Body of pancreas (tissue), 4 donors: ENCODE measurements at regions of chr15 and their contacts with region 1.

Region 1: DNA sequence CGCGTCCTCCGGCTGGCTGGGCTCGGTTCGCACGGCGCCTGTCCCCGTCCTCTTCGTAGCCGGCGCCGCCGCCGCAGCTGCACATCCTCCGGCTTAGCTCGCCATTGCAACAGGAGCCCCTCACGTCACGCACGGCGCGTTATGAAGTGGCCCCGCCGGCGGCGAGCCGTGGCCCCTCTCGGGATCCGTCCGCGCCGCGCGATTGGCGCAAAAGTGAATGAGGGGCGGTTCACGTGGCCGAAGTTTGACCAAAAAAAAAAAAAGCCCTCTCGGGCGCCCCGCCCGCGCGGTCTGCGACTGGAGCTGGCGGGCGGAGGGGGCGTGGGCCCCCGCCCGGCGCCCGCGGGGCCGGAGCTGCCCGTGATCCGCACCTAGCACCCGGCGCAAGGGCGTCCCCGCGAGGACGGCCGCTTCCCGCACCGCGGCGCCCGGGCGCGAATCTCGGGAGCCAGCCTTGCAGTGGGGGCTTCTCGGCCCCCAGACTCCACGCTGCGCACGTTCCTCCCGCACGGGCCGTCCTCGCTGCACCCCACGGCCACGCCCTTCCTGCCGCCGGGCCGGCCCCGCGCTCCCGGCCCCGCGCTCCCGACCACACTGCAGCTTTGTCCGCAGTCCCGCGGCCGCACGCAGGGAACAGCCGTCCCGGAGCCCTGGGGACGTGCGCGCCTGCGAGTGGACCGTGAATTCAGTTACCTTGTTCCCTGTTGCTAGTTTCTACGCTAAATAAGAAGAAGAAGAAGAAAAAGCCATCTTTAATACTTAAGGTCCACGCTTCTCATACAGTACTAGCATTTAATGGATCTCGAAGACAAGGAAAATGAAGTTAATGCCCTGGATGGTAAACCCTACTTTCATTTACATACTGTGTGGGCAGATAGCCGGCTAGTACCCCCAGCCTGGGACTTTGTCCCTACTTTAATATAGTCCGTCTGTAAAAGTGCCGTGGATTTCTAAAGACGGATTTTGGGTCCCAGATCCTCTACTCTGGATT is at the start of gene CHSY1:
- DNase-seq: peak; percentile 87 to 91 (median 90)
- ATAC-seq: peak; percentile 87
- H3K4me3 ChIP-seq: peak within 1 kb of the TSS; percentile 8 to 68
- H3K27ac ChIP-seq: peak within 1 kb of the TSS; percentile 59 to 85 (median 78)
- H3K4me1 ChIP-seq: peaks cover 24% of the 10 kb centered on the region
- H3K27me3 ChIP-seq: no peaks in the 10 kb centered on the region
- CTCF ChIP-seq: peak in 1 of 7 experiments; percentile 20
- POLR2A ChIP-seq: peak; percentile 60 to 75 (median 67)
- total RNA-seq, gene CHSY1: 7.8 to 12.2 TPM

Region 2: DNA sequence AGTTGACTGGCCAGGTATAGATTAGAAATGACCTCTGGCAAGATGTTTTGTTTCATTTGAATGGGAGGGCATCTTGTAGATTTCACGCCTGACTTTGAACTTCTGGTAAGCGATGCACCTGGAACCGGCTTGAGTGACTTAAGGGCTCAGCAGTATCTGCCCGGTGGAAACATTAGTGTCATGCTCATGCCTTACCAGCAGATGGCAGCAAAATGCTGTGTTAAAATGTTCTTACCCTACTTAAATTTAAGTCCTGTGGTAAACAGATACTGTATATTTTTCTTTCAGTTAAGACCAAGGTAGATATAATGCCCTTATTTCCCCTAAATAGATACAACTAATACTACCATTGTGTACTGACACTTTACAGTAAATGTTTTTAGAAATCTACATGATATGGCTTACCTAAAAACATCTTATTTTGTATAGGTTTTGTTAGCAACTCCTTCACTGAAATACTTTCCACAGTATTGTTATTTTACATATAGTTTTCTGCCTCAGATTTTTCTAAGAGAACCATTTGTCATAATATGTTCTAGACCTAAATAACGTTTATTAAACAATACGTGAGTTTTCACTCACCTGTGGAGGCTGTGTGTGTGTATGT is 624.2 kb before region 1 on chr15:
- intact Hi-C with region 1: loop called (anchors 10 kb)
- DNase-seq: peak; percentile 69 to 77 (median 72)
- ATAC-seq: peak; percentile 86
- H3K4me3 ChIP-seq: no peak overlapping the region
- H3K27ac ChIP-seq: no peak overlapping the region
- H3K4me1 ChIP-seq: no peaks in the 10 kb centered on the region
- H3K27me3 ChIP-seq: no peaks in the 10 kb centered on the region
- CTCF ChIP-seq: peak; percentile 51 to 87 (median 76)
- POLR2A ChIP-seq: no peak

Region 3: GRCh38 chr15:101407439-101407838 is 155.3 kb after region 1 on chr15:
- intact Hi-C with region 1: no loop called
- DNase-seq: no peak
- ATAC-seq: no peak
- H3K4me3 ChIP-seq: no peak overlapping the region
- H3K27ac ChIP-seq: no peak overlapping the region
- H3K4me1 ChIP-seq: no peaks in the 10 kb centered on the region
- H3K27me3 ChIP-seq: no peaks in the 10 kb centered on the region
- CTCF ChIP-seq: no peak
- POLR2A ChIP-seq: no peak